Caco-2 (cell line): ENCODE measurements at regions of chr2 and their contacts with region 1.

Region 1: GRCh38 chr2:149167411-149167810 is 128.9 kb downstream of the LYPD6B start:
- DNase-seq: no peak
- H3K4me3 ChIP-seq: no peak overlapping the region
- H3K4me3 Mint-ChIP-seq: no peak overlapping the region
- H3K27ac Mint-ChIP-seq: peak overlapping the region; percentile 25
- H3K4me1 ChIP-seq: peaks cover 43% of the 10 kb centered on the region
- H3K4me1 Mint-ChIP-seq: peaks cover 33% of the 10 kb centered on the region
- H3K27me3 ChIP-seq: no peaks in the 10 kb centered on the region
- H3K27me3 Mint-ChIP-seq: no peaks in the 10 kb centered on the region
- CTCF ChIP-seq: no peak

Region 2: DNA sequence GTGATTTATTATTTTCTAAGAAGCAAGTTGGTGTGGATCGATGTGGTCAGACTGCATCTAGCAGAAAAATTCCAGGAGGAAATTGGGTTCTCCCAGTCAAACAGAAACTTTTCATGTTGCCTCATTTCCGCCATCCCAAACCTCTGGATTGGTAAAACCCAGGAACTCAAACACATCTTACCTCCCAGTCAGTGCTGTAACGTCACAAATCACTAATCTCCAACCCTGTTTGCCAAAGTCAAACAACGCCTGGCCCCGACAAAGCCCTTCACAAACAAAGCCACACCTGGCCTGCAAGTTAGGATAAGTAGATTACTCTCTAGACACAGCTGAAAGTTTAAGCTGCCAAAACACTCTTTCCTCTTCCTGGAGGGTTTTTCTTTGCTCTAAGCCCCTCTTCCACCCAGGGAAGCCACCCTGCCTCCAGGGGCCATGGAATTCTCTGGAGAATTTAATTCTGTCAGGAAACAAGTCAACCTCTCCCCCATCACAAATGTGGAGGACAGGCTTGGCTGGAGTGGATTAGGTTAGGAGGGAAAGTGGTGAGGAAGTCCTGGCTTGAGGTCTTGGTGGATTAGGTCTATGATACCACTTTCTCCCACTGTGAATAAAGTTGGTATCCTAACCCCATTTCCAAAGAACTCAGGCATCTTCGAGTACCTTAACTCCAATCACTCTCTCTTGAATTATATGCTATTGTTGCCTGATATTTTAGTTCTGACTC is 42.2 kb before region 1 on chr2:
- CTCF ChIA-PET with region 1: no interaction called
- POLR2A ChIA-PET with region 1: no interaction called
- intact Hi-C with region 1: loop called (anchors 1 kb)
- DNase-seq: peak; percentile 88 to 90
- H3K4me3 ChIP-seq: 0 out of 2 replicates have a peak overlapping the region, but pooled peaks have one; percentile 5
- H3K4me3 Mint-ChIP-seq: peak overlapping the region; percentile 54
- H3K27ac Mint-ChIP-seq: peak overlapping the region; percentile 78
- H3K4me1 ChIP-seq: peaks cover 39% of the 10 kb centered on the region
- H3K4me1 Mint-ChIP-seq: peaks cover 39% of the 10 kb centered on the region
- H3K27me3 ChIP-seq: no peaks in the 10 kb centered on the region
- H3K27me3 Mint-ChIP-seq: no peaks in the 10 kb centered on the region
- CTCF ChIP-seq: no peak

Region 3: DNA sequence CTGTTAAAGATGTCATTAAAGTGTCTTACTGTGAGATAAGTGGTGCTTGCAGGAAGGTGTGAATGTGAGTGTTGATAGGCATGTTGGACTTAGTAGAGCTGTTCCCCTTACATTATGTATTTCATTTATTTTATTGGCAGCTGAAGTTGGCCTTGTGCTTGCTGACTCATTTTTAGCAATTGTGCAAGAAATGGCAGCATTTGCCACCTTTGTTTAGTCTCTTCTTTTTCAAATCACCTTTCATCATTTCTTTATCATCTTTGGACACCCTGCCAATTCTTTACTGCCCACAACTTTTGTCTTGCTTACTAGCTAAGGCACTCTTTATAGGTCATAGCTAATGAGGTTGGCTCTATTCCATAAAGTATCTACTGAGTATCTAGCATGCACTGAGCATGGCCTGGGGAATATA is 32.7 kb after region 1 on chr2:
- CTCF ChIA-PET with region 1: no interaction called
- POLR2A ChIA-PET with region 1: no interaction called
- intact Hi-C with region 1: loop called (anchors 2 kb)
- DNase-seq: no peak
- H3K4me3 ChIP-seq: no peak overlapping the region
- H3K4me3 Mint-ChIP-seq: no peak overlapping the region
- H3K27ac Mint-ChIP-seq: no peak overlapping the region
- H3K4me1 ChIP-seq: 0 out of 2 replicates have a peak, but pooled peaks cover 5% of the 10 kb centered on the region
- H3K4me1 Mint-ChIP-seq: peaks cover 7% of the 10 kb centered on the region
- H3K27me3 ChIP-seq: no peaks in the 10 kb centered on the region
- H3K27me3 Mint-ChIP-seq: no peaks in the 10 kb centered on the region
- CTCF ChIP-seq: no peak

Region 4: GRCh38 chr2:149221898-149222297 is 54.5 kb after region 1 on chr2:
- CTCF ChIA-PET with region 1: no interaction called
- POLR2A ChIA-PET with region 1: no interaction called
- intact Hi-C with region 1: loop called (anchors 5 kb)
- DNase-seq: peak in 1 of 2 experiments; percentile 54
- H3K4me3 ChIP-seq: no peak overlapping the region
- H3K4me3 Mint-ChIP-seq: no peak overlapping the region
- H3K27ac Mint-ChIP-seq: no peak overlapping the region
- H3K4me1 ChIP-seq: peaks cover 71% of the 10 kb centered on the region
- H3K4me1 Mint-ChIP-seq: peaks cover 59% of the 10 kb centered on the region
- H3K27me3 ChIP-seq: no peaks in the 10 kb centered on the region
- H3K27me3 Mint-ChIP-seq: no peaks in the 10 kb centered on the region
- CTCF ChIP-seq: no peak